Aorta (tissue), 5 donors: ENCODE measurements at regions of chr1 and their contacts with region 1.

Region 1: GRCh38 chr1:72845342-72845741 is 563.0 kb upstream of the NEGR1 start:
- DNase-seq: peak in 1 of 2 donors; percentile 29
- ATAC-seq: no peak
- H3K4me3 ChIP-seq: no peak overlapping the region
- H3K27ac ChIP-seq: no peak overlapping the region
- H3K4me1 ChIP-seq: no peaks in the 10 kb centered on the region
- H3K27me3 ChIP-seq: no peaks in the 10 kb centered on the region

Region 2: GRCh38 chr1:72623299-72623708 is 222.0 kb before region 1 on chr1:
- intact Hi-C with region 1: loop called in 1 of 2 experiments (anchors 10 kb)
- DNase-seq: no peak
- ATAC-seq: peak; percentile 62
- H3K4me3 ChIP-seq: peak overlapping the region in 1 of 2 donors; percentile 6
- H3K27ac ChIP-seq: no peak overlapping the region
- H3K4me1 ChIP-seq: no peaks in the 10 kb centered on the region
- H3K27me3 ChIP-seq: no peaks in the 10 kb centered on the region

Region 3: GRCh38 chr1:72918939-72919338 is 73.6 kb after region 1 on chr1:
- intact Hi-C with region 1: no loop called
- DNase-seq: no peak
- ATAC-seq: no peak
- H3K4me3 ChIP-seq: no peak overlapping the region
- H3K27ac ChIP-seq: no peak overlapping the region
- H3K4me1 ChIP-seq: no peaks in the 10 kb centered on the region
- H3K27me3 ChIP-seq: no peaks in the 10 kb centered on the region

Region 4: GRCh38 chr1:73564294-73564693 is 719.0 kb after region 1 on chr1:
- intact Hi-C with region 1: no loop called
- DNase-seq: no peak
- ATAC-seq: no peak
- H3K4me3 ChIP-seq: no peak overlapping the region
- H3K27ac ChIP-seq: no peak overlapping the region
- H3K4me1 ChIP-seq: no peaks in the 10 kb centered on the region
- H3K27me3 ChIP-seq: no peaks in the 10 kb centered on the region